Activated naive CD8-positive, alpha-beta T cell treated with anti-CD3 and anti-CD28 coated beads, Interleukin-2, amount 10 ng/mL, durations not matched to agents 7 days and 5 days (primary cell): ENCODE measurements at regions of chr1 and their contacts with region 1.

Region 1: GRCh38 chr1:52702886-52703787 is 5.0 kb upstream of the COA7 start:
- DNase-seq: peak; percentile 77
- ATAC-seq: peak; percentile 94
- H3K4me3 Mint-ChIP-seq: peak overlapping the region; percentile 81
- H3K27ac Mint-ChIP-seq: peak overlapping the region; percentile 89
- H3K4me1 Mint-ChIP-seq: peaks cover 31% of the 10 kb centered on the region
- H3K27me3 Mint-ChIP-seq: peaks cover 3% of the 10 kb centered on the region

Region 2: DNA sequence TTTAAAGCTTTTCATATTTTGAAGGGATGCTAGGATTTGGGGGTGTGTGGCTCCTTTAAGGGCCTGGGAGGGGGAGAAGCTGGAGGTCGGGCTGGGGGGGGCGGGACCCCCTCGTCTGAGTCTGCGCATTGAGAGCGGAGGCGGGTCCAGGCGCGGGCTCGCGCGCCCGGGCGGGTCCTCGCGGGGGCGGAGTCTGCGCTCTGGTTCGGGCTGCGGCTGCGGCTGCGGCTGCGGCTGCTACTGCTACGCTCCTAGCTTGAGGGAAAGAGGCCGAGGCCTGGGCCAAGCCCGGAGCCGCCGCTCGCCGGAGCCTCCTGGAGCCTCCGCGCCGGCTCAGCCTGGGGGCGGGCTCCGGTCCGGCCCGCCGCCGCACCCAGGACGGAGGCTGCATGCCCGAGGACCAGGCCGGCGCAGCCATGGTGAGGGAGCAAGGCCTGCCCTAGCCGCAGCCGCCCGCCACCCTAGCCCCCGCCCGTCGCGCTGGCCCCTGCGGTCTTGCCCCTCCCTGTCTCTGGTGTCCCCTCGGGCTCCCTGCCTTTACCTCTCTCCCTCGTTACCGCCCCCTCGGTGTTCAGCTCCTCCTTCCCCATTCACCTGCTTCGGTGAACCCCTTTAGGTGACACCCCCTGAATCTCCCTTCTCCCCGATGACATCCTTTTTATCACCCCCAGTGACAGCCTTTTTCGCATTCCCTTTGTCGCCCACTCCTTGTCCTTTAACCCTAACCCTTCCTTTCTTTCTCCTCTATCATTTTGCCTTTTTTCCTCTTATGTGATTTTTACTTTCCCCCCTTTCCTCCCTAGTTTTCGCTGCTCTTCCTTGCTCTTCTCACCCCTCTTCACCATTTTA is 23.4 kb after region 1 on chr1 and contains the start of gene ZYG11B:
- POLR2A ChIA-PET with region 1: interaction called, 16 read pairs
- DNase-seq: peak; percentile 97
- ATAC-seq: peak; percentile 88
- H3K4me3 Mint-ChIP-seq: peak within 1 kb of the TSS; percentile 93
- H3K27ac Mint-ChIP-seq: peak within 1 kb of the TSS; percentile 91
- H3K4me1 Mint-ChIP-seq: peaks cover 24% of the 10 kb centered on the region
- H3K27me3 Mint-ChIP-seq: peaks cover 5% of the 10 kb centered on the region
- total RNA-seq, gene ZYG11B: 13.7 to 13.8 TPM